Naive thymus-derived CD4-positive, alpha-beta T cell (primary cell): ENCODE measurements at regions of chr9 and their contacts with region 1.

Region 1: GRCh38 chr9:96854073-96854876 is at the start of gene ZNF782:
- DNase-seq: peak; percentile 66 to 84 (median 77)
- ATAC-seq: peak; percentile 94
- H3K4me3 ChIP-seq: peak within 1 kb of the TSS; percentile 89
- H3K4me3 Mint-ChIP-seq: peak within 1 kb of the TSS; percentile 90 to 100 (median 100)
- H3K27ac ChIP-seq: peak within 1 kb of the TSS; percentile 83
- H3K27ac Mint-ChIP-seq: peak within 1 kb of the TSS; percentile 89 to 100 (median 97)
- H3K4me1 ChIP-seq: peaks cover 15 to 18% of the 10 kb centered on the region in 2 donors
- H3K4me1 Mint-ChIP-seq: peaks cover 28 to 54% (median 42%) of the 10 kb centered on the region in 7 donors
- H3K27me3 ChIP-seq: no peaks in the 10 kb centered on the region
- H3K27me3 Mint-ChIP-seq: peaks cover 0 to 22% (median 0%) of the 10 kb centered on the region in 5 donors
- total RNA-seq, gene ZNF782: 6.2 to 12.4 (median 8.2) TPM

Region 2: GRCh38 chr9:96327694-96328352 is 526.5 kb before region 1 on chr9:
- CTCF ChIA-PET with region 1: interaction called, 3 read pairs
- POLR2A ChIA-PET with region 1: no interaction called
- intact Hi-C with region 1: loop called in 1 of 2 experiments (anchors 5 kb)
- DNase-seq: peak in 8 of 9 donors; percentile 18 to 70 (median 54)
- ATAC-seq: peak; percentile 87
- H3K4me3 ChIP-seq: no peak overlapping the region
- H3K4me3 Mint-ChIP-seq: no peak overlapping the region
- H3K27ac ChIP-seq: no peak overlapping the region
- H3K27ac Mint-ChIP-seq: no peak overlapping the region
- H3K4me1 ChIP-seq: no peaks in the 10 kb centered on the region
- H3K4me1 Mint-ChIP-seq: no peaks in the 10 kb centered on the region
- H3K27me3 ChIP-seq: no peaks in the 10 kb centered on the region
- H3K27me3 Mint-ChIP-seq: no peaks in the 10 kb centered on the region

Region 3: GRCh38 chr9:96777426-96777864 is 76.8 kb before region 1 on chr9:
- CTCF ChIA-PET with region 1: no interaction called
- POLR2A ChIA-PET with region 1: interaction called, 9 read pairs
- intact Hi-C with region 1: loop called (anchors 1 kb)
- DNase-seq: peak in 5 of 9 donors; percentile 18 to 47 (median 29)
- ATAC-seq: peak; percentile 28
- H3K4me3 ChIP-seq: peak overlapping the region; percentile 84
- H3K4me3 Mint-ChIP-seq: peak overlapping the region; percentile 91 to 100 (median 98)
- H3K27ac ChIP-seq: peak overlapping the region; percentile 92
- H3K27ac Mint-ChIP-seq: peak overlapping the region; percentile 94 to 100 (median 98)
- H3K4me1 ChIP-seq: peaks cover 6 to 12% of the 10 kb centered on the region in 2 donors
- H3K4me1 Mint-ChIP-seq: peaks cover 12 to 64% (median 58%) of the 10 kb centered on the region in 7 donors
- H3K27me3 ChIP-seq: no peaks in the 10 kb centered on the region
- H3K27me3 Mint-ChIP-seq: no peaks in the 10 kb centered on the region

Region 4: GRCh38 chr9:96892131-96892530 is 37.9 kb after region 1 on chr9:
- CTCF ChIA-PET with region 1: no interaction called
- POLR2A ChIA-PET with region 1: no interaction called
- intact Hi-C with region 1: no loop called
- DNase-seq: no peak
- ATAC-seq: no peak
- H3K4me3 ChIP-seq: no peak overlapping the region
- H3K4me3 Mint-ChIP-seq: no peak overlapping the region
- H3K27ac ChIP-seq: no peak overlapping the region
- H3K27ac Mint-ChIP-seq: peak overlapping the region in 1 of 9 donors; percentile 5
- H3K4me1 ChIP-seq: no peaks in the 10 kb centered on the region
- H3K4me1 Mint-ChIP-seq: no peaks in the 10 kb centered on the region
- H3K27me3 ChIP-seq: no peaks in the 10 kb centered on the region
- H3K27me3 Mint-ChIP-seq: no peaks in the 10 kb centered on the region

Region 5: GRCh38 chr9:97220894-97221477 is 366.7 kb after region 1 on chr9:
- CTCF ChIA-PET with region 1: no interaction called
- POLR2A ChIA-PET with region 1: no interaction called
- intact Hi-C with region 1: loop called in 1 of 2 experiments (anchors 5 kb)
- DNase-seq: no peak
- ATAC-seq: peak; percentile 38
- H3K4me3 ChIP-seq: peak overlapping the region; percentile 46
- H3K4me3 Mint-ChIP-seq: peak overlapping the region; percentile 78 to 89 (median 83)
- H3K27ac ChIP-seq: no peak overlapping the region
- H3K27ac Mint-ChIP-seq: no peak overlapping the region
- H3K4me1 ChIP-seq: no peaks in the 10 kb centered on the region
- H3K4me1 Mint-ChIP-seq: peaks cover 4 to 11% (median 6%) of the 10 kb centered on the region in 7 donors
- H3K27me3 ChIP-seq: peaks cover 4 to 5% of the 10 kb centered on the region in 2 donors
- H3K27me3 Mint-ChIP-seq: peaks cover 46 to 69% (median 52%) of the 10 kb centered on the region in 5 donors

Region 6: GRCh38 chr9:97398999-97399758 is 544.9 kb after region 1 on chr9:
- CTCF ChIA-PET with region 1: interaction called, 11 read pairs
- POLR2A ChIA-PET with region 1: no interaction called
- intact Hi-C with region 1: loop called (anchors 1 kb)
- DNase-seq: peak; percentile 35 to 75 (median 51)
- ATAC-seq: peak; percentile 88
- H3K4me3 ChIP-seq: no peak overlapping the region
- H3K4me3 Mint-ChIP-seq: peak overlapping the region in 1 of 10 donors; percentile 49
- H3K27ac ChIP-seq: no peak overlapping the region
- H3K27ac Mint-ChIP-seq: peak overlapping the region in 1 of 9 donors; percentile 72
- H3K4me1 ChIP-seq: no peaks in the 10 kb centered on the region
- H3K4me1 Mint-ChIP-seq: peaks cover 0 to 27% (median 0%) of the 10 kb centered on the region in 7 donors
- H3K27me3 ChIP-seq: no peaks in the 10 kb centered on the region
- H3K27me3 Mint-ChIP-seq: peaks cover 5 to 44% (median 6%) of the 10 kb centered on the region in 5 donors

Region 7: DNA sequence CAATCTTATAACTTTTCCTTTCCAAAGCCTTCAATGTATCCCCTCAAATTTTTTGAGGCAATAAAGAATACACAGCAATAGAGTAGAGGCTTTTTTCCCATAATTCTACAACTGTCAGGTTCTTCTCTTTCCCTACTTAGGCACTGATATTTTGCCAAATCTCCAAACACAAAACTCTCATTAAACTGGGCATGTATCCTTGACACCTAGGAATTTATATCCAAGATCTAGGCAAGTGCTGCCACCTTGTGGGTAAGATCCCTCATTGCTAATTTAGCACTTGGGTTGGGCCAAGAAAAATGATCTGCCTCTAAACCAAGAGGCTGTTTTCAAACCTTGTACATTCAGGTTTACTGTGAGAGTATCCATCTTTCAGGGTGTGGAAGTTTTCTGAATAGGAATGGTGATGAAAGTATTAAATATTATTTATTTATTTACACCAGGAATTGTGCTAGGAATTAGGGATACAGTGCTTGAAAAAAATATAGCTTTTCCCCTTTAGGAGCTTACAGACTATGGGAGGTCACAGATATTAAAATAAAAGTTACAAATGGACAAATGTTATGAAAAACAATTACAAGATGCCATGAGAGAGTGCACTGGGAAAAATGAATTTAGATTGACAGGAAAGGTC is 761.3 kb after region 1 on chr9:
- CTCF ChIA-PET with region 1: interaction called, 18 read pairs
- POLR2A ChIA-PET with region 1: no interaction called
- intact Hi-C with region 1: loop called (anchors 1 to 5 kb)
- DNase-seq: peak in 8 of 9 donors; percentile 29 to 61 (median 52)
- ATAC-seq: peak; percentile 76
- H3K4me3 ChIP-seq: no peak overlapping the region
- H3K4me3 Mint-ChIP-seq: no peak overlapping the region
- H3K27ac ChIP-seq: no peak overlapping the region
- H3K27ac Mint-ChIP-seq: peak overlapping the region in 1 of 9 donors; percentile 37
- H3K4me1 ChIP-seq: no peaks in the 10 kb centered on the region
- H3K4me1 Mint-ChIP-seq: peaks cover 0 to 15% (median 0%) of the 10 kb centered on the region in 7 donors
- H3K27me3 ChIP-seq: no peaks in the 10 kb centered on the region
- H3K27me3 Mint-ChIP-seq: no peaks in the 10 kb centered on the region